CD4-positive, alpha-beta memory T cell (primary cell): ENCODE measurements at regions of chr14 and their contacts with region 1.

Region 1: GRCh38 chr14:55270832-55271565 is at the start of gene FBXO34:
- DNase-seq: peak; percentile 97 to 100 (median 98)
- H3K4me3 ChIP-seq: peak within 1 kb of the TSS; percentile 76 to 90
- H3K4me3 Mint-ChIP-seq: peak within 1 kb of the TSS; percentile 89 to 95 (median 92)
- H3K27ac ChIP-seq: peak within 1 kb of the TSS; percentile 91
- H3K27ac Mint-ChIP-seq: peak within 1 kb of the TSS; percentile 93 to 96 (median 95)
- H3K4me1 ChIP-seq: peaks cover 41% of the 10 kb centered on the region
- H3K4me1 Mint-ChIP-seq: peaks cover 31 to 48% (median 36%) of the 10 kb centered on the region in 4 donors
- H3K27me3 ChIP-seq: no peaks in the 10 kb centered on the region
- H3K27me3 Mint-ChIP-seq: no peaks in the 10 kb centered on the region
- total RNA-seq, gene FBXO34: 42.1 to 43.6 TPM

Region 2: DNA sequence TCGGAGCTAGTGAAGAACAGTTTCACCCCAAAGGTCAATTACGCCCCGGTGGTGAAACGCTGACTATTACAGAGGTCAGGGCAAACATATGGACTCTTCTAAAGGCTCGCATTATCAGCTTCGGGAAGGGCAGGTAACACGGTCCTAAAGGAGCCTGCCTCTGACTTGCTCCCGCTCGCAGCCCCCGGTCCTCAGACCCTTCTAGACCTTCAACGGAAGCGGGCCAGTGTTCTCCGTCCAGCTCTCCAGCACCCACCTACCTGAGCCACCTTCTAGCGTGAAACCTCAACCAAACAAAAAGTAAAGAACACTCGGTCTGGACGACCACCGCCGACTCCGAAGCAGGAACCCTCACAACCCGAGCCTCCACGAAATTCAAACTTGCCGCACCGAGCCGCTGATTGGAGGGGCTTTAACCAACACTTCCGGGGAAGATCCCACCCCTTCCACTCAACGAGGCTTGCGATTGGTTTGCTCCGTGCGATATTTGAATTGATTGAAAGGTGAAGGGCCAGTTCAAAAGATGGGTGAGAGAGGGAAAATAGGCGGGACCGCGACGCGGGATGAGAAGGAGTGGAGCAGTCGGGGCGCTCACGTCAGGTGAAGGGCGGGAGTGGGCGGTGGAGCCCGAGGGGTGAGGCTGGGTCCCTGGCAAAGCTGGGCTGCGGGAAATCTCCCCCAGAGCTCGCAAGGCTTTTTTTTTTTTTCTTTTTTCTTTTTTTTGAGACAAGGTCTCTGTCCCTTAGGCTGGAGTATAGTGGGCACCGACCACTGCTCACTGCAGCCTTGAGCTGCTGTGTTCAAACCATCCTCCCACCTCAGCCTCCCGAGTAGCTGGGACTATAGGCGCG is 79.6 kb before region 1 on chr14 and contains the start of gene DLGAP5:
- CTCF ChIA-PET with region 1: no interaction called
- POLR2A ChIA-PET with region 1: no interaction called
- intact Hi-C with region 1: no loop called
- DNase-seq: peak; percentile 89 to 95 (median 90)
- H3K4me3 ChIP-seq: peak within 1 kb of the TSS; percentile 36 to 76
- H3K4me3 Mint-ChIP-seq: peak within 1 kb of the TSS; percentile 84 to 97 (median 90)
- H3K27ac ChIP-seq: peak within 1 kb of the TSS; percentile 60
- H3K27ac Mint-ChIP-seq: peak within 1 kb of the TSS; percentile 13 to 94 (median 87)
- H3K4me1 ChIP-seq: peaks cover 15% of the 10 kb centered on the region
- H3K4me1 Mint-ChIP-seq: peaks cover 6 to 25% (median 13%) of the 10 kb centered on the region in 4 donors
- H3K27me3 ChIP-seq: no peaks in the 10 kb centered on the region
- H3K27me3 Mint-ChIP-seq: no peaks in the 10 kb centered on the region
- total RNA-seq, gene DLGAP5: not detected

Region 3: GRCh38 chr14:55212634-55213033 is 58.4 kb before region 1 on chr14:
- CTCF ChIA-PET with region 1: interaction called, 6 read pairs
- POLR2A ChIA-PET with region 1: interaction called, 3 read pairs
- intact Hi-C with region 1: loop called (anchors 1 kb)
- DNase-seq: no peak
- H3K4me3 ChIP-seq: no peak overlapping the region
- H3K4me3 Mint-ChIP-seq: no peak overlapping the region
- H3K27ac ChIP-seq: no peak overlapping the region
- H3K27ac Mint-ChIP-seq: no peak overlapping the region
- H3K4me1 ChIP-seq: no peaks in the 10 kb centered on the region
- H3K4me1 Mint-ChIP-seq: peaks cover 0 to 5% (median 2%) of the 10 kb centered on the region in 4 donors
- H3K27me3 ChIP-seq: no peaks in the 10 kb centered on the region
- H3K27me3 Mint-ChIP-seq: peaks cover 0 to 1% of the 10 kb centered on the region in 2 donors

Region 4: DNA sequence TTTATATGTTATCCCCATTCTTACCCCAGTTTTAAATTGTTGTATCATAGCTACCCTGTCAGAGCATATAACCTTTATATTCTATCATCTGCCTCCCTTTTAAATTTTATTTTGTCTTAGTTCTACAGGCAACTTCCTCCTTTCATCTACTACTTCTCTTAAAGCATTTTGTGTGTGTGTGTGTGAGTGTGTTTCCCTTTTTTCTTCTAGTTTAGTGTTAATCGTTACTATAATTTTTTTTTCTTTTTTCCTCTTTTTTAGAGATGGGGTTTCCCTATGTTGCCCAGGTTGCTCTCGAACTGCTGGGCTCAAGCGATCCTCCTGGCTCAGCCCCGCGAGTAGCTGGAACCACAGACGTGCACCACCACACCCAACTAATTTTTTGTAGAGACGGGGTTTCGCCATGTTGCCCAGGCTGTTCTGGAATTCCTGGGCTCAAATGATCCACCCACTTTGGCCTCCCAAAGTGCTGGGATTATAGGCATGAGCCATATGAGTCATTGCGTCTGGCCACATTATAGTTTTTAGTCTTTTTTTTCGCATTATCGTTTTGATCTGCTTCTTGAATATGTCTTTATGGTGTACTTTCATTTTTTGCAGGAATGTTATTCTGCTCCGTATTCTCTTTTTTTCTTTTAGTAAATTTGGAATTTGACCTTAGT is 32.8 kb before region 1 on chr14:
- CTCF ChIA-PET with region 1: no interaction called
- POLR2A ChIA-PET with region 1: no interaction called
- intact Hi-C with region 1: no loop called
- DNase-seq: no peak
- H3K4me3 ChIP-seq: no peak overlapping the region
- H3K4me3 Mint-ChIP-seq: no peak overlapping the region
- H3K27ac ChIP-seq: no peak overlapping the region
- H3K27ac Mint-ChIP-seq: no peak overlapping the region
- H3K4me1 ChIP-seq: no peaks in the 10 kb centered on the region
- H3K4me1 Mint-ChIP-seq: no peaks in the 10 kb centered on the region
- H3K27me3 ChIP-seq: no peaks in the 10 kb centered on the region
- H3K27me3 Mint-ChIP-seq: peaks cover 6 to 9% of the 10 kb centered on the region in 2 donors

Region 5: GRCh38 chr14:55285048-55285652 is 14.2 kb after region 1 on chr14:
- CTCF ChIA-PET with region 1: interaction called, 22 read pairs
- POLR2A ChIA-PET with region 1: no interaction called
- intact Hi-C with region 1: loop called (anchors 2 kb)
- DNase-seq: no peak
- H3K4me3 ChIP-seq: no peak overlapping the region
- H3K4me3 Mint-ChIP-seq: peak overlapping the region in 1 of 8 donors; percentile 17
- H3K27ac ChIP-seq: no peak overlapping the region
- H3K27ac Mint-ChIP-seq: peak overlapping the region in 1 of 7 donors; percentile 33
- H3K4me1 ChIP-seq: peaks cover 7% of the 10 kb centered on the region
- H3K4me1 Mint-ChIP-seq: peaks cover 41 to 65% (median 55%) of the 10 kb centered on the region in 4 donors
- H3K27me3 ChIP-seq: no peaks in the 10 kb centered on the region
- H3K27me3 Mint-ChIP-seq: no peaks in the 10 kb centered on the region

Region 6: DNA sequence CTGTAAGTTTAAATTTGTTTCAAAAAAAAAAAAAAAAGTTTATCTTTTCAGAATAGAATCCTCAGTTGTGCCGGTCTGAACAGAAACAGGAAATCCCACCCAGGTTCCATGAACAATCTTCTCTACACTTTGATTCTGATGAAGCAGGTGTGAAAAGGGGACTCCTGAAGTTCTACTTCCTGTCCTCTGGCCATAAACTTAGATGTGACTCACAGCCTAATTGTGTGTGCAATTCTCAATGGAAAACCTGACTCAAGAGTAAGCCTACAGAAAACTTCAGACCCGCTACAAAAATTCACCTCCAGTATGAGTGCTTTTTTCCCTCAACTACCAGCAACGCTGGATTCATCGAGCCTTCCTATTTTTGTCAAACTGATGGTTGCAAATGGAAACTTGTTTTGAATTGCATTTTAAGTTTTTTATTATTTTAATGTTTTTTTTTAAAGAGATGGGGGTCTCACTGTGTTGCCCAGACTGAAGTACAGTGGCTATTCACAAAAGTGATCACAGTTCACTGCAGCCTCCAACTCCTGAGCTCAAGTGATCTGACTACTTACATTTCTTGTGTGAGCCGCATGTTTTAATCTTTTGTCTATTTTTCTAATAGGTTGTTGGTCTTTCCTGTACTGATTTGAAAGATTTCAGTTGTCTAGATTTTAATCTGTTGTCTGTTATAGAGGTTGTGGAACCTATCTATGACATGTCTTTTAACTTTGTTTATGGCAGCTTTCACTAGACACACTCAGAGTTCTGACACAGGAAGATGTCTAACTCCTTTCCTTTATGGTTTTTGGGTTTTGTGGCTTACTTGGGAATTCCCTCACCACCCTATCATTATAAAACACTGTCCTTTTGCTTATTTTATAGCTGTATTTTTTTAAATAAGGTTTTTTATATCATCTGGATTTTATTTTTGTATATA is 103.0 kb after region 1 on chr14:
- CTCF ChIA-PET with region 1: interaction called, 20 read pairs
- POLR2A ChIA-PET with region 1: interaction called, 3 read pairs
- intact Hi-C with region 1: no loop called
- DNase-seq: peak; percentile 68 to 85 (median 70)
- H3K4me3 ChIP-seq: peak overlapping the region in 1 of 2 donors; percentile 18
- H3K4me3 Mint-ChIP-seq: peak overlapping the region; percentile 52 to 87 (median 58)
- H3K27ac ChIP-seq: peak overlapping the region; percentile 33
- H3K27ac Mint-ChIP-seq: peak overlapping the region; percentile 81 to 98 (median 89)
- H3K4me1 ChIP-seq: peaks cover 33% of the 10 kb centered on the region
- H3K4me1 Mint-ChIP-seq: peaks cover 32 to 49% (median 38%) of the 10 kb centered on the region in 4 donors
- H3K27me3 ChIP-seq: no peaks in the 10 kb centered on the region
- H3K27me3 Mint-ChIP-seq: no peaks in the 10 kb centered on the region

Region 7: GRCh38 chr14:55411426-55412389 is 140.7 kb after region 1 on chr14 and contains the start of gene ATG14:
- CTCF ChIA-PET with region 1: interaction called, 6 read pairs
- POLR2A ChIA-PET with region 1: interaction called, 3 read pairs
- intact Hi-C with region 1: loop called (anchors 5 kb)
- DNase-seq: peak; percentile 65 to 76 (median 73)
- H3K4me3 ChIP-seq: peak within 1 kb of the TSS; percentile 90 to 93
- H3K4me3 Mint-ChIP-seq: peak within 1 kb of the TSS; percentile 88 to 94 (median 92)
- H3K27ac ChIP-seq: peak within 1 kb of the TSS; percentile 78
- H3K27ac Mint-ChIP-seq: peak within 1 kb of the TSS; percentile 45 to 96 (median 91)
- H3K4me1 ChIP-seq: peaks cover 24% of the 10 kb centered on the region
- H3K4me1 Mint-ChIP-seq: peaks cover 27 to 49% (median 38%) of the 10 kb centered on the region in 4 donors
- H3K27me3 ChIP-seq: no peaks in the 10 kb centered on the region
- H3K27me3 Mint-ChIP-seq: peaks cover 0 to 2% of the 10 kb centered on the region in 2 donors
- total RNA-seq, gene ATG14: 18.3 to 18.4 TPM